Sciatic nerve (tissue), 2 donors: ENCODE measurements at regions of chr2 and their contacts with region 1.

Region 1: GRCh38 chr2:42494355-42495233 is 812 bp upstream of the KCNG3 start:
- DNase-seq: peak; percentile 88
- ATAC-seq: peak; percentile 79

Region 2: DNA sequence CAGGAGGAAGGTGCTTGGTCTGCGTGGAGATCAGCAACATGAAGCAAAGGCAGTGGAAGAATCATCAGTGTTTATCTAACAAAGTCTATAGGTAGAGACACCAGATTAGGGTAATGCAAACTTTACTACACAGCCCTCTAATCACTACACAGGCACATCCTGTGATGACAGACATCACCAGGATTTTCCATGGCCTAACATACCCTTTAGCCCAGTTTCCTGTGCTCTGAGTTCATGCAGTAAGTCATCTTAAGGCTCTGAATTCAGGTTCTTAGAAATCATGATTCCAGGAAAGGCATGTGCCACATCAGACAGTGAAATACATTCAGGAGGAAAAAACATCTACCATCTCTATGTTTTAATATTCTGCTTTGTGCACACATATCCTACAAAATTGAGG is 1334.2 kb before region 1 on chr2:
- intact Hi-C with region 1: no loop called
- DNase-seq: no peak
- ATAC-seq: no peak

Region 3: GRCh38 chr2:41464395-41464794 is 1030.2 kb before region 1 on chr2:
- intact Hi-C with region 1: no loop called
- DNase-seq: no peak
- ATAC-seq: no peak

Region 4: DNA sequence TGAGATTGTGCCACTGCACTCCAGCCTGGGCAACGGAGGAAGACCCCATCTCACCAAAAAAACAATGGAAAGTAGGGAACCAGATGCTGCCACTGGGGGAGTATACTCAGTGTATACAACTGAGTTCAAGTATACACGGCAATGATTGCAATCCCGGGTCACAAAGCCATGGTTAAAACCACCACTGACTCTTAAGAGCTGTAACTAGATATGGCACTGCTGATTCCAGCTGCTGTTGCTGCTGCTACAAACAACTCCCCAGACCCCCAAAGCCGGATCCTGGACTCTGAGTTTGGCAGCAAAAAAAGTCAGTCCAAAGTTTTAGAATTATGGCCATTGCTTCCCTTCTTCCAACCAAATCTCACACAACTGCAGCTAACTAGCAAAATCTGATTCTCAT is 89.9 kb before region 1 on chr2:
- intact Hi-C with region 1: no loop called
- DNase-seq: no peak
- ATAC-seq: no peak

Region 5: GRCh38 chr2:42659609-42660008 is 165.0 kb after region 1 on chr2:
- intact Hi-C with region 1: loop called (anchors 10 kb)
- DNase-seq: no peak
- ATAC-seq: no peak